Left ventricle myocardium inferior (tissue), 1 donor: ENCODE measurements at regions of chr13 and their contacts with region 1.

Region 1: DNA sequence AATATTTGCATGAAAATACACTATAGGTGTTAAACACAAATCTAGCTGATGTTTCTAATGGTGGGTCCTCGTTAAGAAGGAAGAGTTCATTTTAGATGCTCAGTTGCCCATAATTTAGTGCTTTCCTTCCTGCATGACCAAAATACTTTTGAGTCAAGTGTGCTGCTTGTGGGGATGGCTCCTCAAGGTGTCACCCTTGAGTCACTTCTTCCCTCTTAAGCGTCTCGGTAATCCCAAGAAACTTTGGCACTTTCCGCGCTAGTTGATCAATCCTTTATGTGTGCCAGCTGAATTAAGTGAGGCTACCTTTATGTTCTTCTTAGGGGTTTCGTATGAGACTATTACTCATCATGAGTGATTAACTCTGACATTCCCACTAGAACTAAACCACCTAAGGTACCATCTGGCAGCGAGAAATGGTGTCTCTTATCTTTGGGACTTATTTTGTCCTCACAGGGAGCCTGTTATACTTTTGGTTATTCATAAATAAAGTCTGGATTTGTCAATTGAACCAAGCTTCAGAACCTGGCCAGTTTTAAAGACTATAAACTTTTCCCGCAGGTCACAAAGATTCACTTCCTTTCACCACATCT is 106.8 kb downstream of the NHLRC3 start:
- DNase-seq: peak; percentile 40
- H3K4me3 ChIP-seq: peak overlapping the region; percentile 48
- H3K27ac ChIP-seq: peak overlapping the region; percentile 51
- H3K4me1 ChIP-seq: peaks cover 17% of the 10 kb centered on the region
- H3K27me3 ChIP-seq: no peaks in the 10 kb centered on the region
- CTCF ChIP-seq: peak; percentile 89

Region 2: GRCh38 chr13:39105110-39105509 is 39.9 kb before region 1 on chr13:
- intact Hi-C with region 1: no loop called
- DNase-seq: no peak
- H3K4me3 ChIP-seq: no peak overlapping the region
- H3K27ac ChIP-seq: no peak overlapping the region
- H3K4me1 ChIP-seq: peaks cover 3% of the 10 kb centered on the region
- H3K27me3 ChIP-seq: no peaks in the 10 kb centered on the region
- CTCF ChIP-seq: no peak

Region 3: GRCh38 chr13:39273953-39274738 is 129.1 kb after region 1 on chr13:
- intact Hi-C with region 1: loop called (anchors 5 kb)
- DNase-seq: no peak
- H3K4me3 ChIP-seq: no peak overlapping the region
- H3K27ac ChIP-seq: peak overlapping the region; percentile 53
- H3K4me1 ChIP-seq: peaks cover 19% of the 10 kb centered on the region
- H3K27me3 ChIP-seq: no peaks in the 10 kb centered on the region
- CTCF ChIP-seq: peak; percentile 46